GM13976 (cell line): ENCODE measurements at regions of chr18 and their contacts with region 1.

Region 1: GRCh38 chr18:47215554-47216138 is 35.8 kb downstream of the SKOR2 start:
- DNase-seq: peak; percentile 27
- CTCF ChIP-seq: peak; percentile 44

Region 2: GRCh38 chr18:47756364-47757016 is 540.8 kb after region 1 on chr18:
- in situ Hi-C with region 1: loop called (anchors 10 kb)
- DNase-seq: peak; percentile 70
- CTCF ChIP-seq: peak; percentile 98